Lower lobe of right lung (tissue), 2 donors: ENCODE measurements at regions of chr3 and their contacts with region 1.

Region 1: DNA sequence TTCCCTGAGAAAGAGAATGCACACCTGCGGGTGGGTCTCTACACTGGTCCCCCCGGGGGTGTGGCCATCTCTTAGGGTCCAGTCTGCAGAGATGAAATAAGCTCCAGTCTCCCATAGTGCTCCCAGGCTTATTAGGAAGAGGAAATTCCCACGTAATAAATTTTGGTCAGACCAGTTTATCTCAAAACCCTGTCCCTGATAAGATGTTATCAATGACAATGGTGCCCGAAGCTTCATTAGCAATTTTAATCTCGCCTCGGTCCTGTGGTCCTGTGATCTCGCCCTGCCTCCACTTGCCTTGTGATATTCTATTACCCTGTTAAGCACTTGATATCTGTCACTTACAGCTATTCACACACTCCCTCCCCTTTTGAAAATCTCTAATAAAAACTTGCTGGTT is 46.8 kb downstream of the OR5H15 start:
- DNase-seq: no peak
- ATAC-seq: no peak
- H3K4me3 ChIP-seq: no peak overlapping the region
- H3K27ac ChIP-seq: no peak overlapping the region
- H3K4me1 ChIP-seq: no peaks in the 10 kb centered on the region
- H3K27me3 ChIP-seq: no peaks in the 10 kb centered on the region
- CTCF ChIP-seq: no peak

Region 2: DNA sequence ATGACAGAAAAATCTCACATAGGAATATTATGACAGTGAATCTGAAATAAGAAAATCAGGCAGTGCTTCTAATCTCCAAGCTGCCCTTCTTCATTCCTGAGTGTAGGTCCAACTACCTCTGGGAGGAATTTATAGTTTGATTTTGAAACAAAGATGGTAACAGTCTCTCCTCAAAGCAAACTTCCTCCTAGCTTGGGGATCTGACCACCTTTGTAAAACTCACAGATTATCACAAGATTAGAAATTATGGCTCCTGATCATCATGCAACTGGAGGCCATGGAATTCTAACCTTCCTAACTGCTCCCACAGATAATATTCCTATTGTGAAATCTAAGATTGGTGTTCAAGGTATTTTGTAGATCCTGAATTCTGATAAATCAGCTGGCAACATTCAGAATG is 58.6 kb before region 1 on chr3:
- intact Hi-C with region 1: loop called (anchors 2 kb)
- DNase-seq: no peak
- ATAC-seq: no peak
- H3K4me3 ChIP-seq: no peak overlapping the region
- H3K27ac ChIP-seq: no peak overlapping the region
- H3K4me1 ChIP-seq: no peaks in the 10 kb centered on the region
- H3K27me3 ChIP-seq: no peaks in the 10 kb centered on the region
- CTCF ChIP-seq: no peak